Activated naive CD8-positive, alpha-beta T cell treated with anti-CD3 and anti-CD28 coated beads, Interleukin-2, amount 10 ng/mL, durations not matched to agents 7 days and 5 days (primary cell): ENCODE measurements at regions of chr16 and their contacts with region 1.

Region 1: DNA sequence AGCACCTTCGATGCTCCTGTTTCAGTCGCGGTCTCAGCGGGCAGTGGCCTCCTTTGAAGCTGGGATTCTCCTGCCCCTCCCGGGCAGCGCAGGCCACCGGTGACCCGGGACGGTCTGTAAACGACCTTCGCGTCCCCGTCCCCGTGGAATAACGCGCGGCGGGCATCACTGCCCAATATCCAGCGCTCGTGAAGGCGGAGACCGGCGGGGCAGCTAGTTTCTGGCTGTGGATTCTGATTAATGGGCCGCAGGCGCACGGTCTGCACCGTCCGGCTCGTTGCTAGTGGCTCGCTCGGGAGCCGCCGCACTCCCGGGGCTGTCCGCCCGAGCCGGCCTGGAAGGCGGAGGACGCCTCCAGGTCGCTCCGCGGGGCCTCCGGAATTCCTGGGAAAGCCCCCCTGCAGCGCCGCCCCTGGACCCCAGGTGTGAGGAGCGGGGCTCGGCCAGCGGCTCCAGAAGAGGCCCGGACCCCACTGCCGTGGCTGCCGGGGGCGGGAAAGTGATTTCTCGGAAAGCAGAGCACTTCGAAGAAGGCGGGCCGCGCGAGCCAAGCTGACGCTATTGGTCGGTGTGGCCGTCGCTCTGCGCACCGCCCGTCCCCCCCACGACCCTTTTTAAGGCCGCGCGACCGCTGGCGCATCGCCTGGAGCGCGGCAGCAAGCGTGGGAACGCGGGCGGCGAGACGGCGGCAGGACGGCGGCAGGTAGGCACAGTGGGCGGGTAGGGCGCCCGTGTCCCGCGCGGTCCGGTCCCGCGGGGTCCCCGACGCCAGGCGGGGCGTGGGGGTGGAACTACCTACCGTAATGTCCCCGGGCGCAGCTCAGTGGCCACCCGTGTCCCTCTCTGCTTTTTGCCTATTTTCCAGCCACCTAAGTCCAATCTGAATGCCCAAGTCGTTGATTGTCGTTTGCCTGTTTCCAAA is at the start of gene IRF8:
- DNase-seq: peak; percentile 87
- ATAC-seq: peak; percentile 79
- H3K4me3 Mint-ChIP-seq: peak within 1 kb of the TSS; percentile 86
- H3K27ac Mint-ChIP-seq: peak within 1 kb of the TSS; percentile 75
- H3K4me1 Mint-ChIP-seq: peaks cover 53% of the 10 kb centered on the region
- H3K27me3 Mint-ChIP-seq: peaks cover 6% of the 10 kb centered on the region
- total RNA-seq, gene IRF8: 27.8 to 30.8 TPM

Region 2: DNA sequence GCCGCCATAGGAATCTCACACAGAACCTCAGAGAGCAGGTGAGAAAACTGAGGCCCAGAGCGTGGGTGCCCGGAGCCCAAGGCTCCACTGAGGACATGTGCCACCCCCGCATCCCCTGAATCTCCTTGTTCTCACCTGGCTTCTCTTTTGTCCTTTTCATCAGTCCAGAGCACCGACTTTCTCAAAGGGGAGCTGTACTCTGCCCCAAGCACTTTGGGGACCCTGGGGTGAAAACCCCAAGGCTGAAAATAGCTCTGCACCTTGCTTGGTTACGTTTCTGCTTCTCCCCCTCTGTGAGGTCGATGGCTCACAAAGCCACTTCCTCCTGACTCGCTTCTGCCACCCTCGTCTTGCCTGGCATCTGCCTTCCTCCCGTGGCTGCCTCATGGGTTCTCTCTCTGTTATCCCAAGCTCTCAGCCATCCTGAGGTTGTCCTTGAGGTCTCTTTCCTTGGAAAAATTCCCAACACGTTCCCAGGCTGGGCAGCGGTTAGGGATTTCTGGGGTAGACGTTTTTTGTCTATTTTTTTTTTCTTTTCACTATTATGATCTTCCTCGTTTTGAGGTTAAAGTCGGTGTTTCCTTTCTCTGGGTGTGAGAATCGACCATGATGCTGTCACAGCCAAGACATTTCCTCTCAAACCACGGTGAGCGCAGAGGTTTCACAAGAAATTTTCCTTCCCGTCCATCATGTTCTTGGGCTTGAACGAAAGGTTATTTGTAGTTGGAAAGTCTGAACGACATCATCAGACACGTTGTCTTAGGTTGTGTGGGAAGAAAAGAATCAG is 37.4 kb after region 1 on chr16:
- POLR2A ChIA-PET with region 1: interaction called, 18 read pairs
- DNase-seq: peak; percentile 75
- ATAC-seq: peak; percentile 88
- H3K4me3 Mint-ChIP-seq: peak overlapping the region; percentile 78
- H3K27ac Mint-ChIP-seq: peak overlapping the region; percentile 95
- H3K4me1 Mint-ChIP-seq: peaks cover 40% of the 10 kb centered on the region
- H3K27me3 Mint-ChIP-seq: no peaks in the 10 kb centered on the region

Region 3: DNA sequence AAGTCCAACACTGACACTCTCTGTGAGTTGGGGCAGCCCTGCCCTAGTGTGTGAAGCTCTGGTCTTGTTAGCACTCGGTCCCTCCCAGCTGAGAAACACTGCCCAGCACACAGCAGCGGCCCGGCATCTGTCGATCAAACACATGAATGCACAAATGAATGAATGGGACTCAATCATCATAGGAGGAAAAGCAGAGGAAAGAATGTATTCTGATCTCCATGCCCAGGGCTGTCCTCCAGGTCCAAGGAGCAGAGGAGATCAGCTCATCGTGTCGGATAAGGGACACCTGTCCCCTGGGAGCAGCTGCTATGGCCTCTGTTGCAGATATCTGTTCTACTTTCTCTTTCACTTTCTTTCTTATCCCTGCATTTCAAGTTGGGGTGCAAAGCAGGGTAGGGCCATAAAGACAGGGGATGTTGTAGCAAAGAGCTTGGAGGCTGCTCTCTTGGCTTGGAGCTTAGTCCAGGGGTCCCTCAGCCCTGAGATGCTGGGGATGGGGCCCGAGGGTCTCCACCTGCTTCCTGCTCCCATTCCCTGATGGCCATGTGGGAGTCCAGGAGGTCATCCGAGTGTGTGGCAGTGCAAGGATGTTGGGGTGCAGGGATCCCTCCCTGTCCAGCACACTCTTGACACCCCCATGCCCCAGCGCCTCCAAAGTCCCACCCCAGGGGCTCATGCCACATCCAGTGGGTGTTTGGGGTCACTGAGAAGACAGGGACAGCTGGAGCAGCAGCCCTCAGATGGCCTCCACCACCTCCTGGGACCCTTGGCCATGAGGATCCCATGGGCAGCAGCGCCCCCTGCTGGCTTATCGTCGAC is 88.4 kb after region 1 on chr16:
- POLR2A ChIA-PET with region 1: interaction called, 12 read pairs
- DNase-seq: peak; percentile 69
- ATAC-seq: peak; percentile 65
- H3K4me3 Mint-ChIP-seq: peak overlapping the region; percentile 41
- H3K27ac Mint-ChIP-seq: peak overlapping the region; percentile 68
- H3K4me1 Mint-ChIP-seq: peaks cover 37% of the 10 kb centered on the region
- H3K27me3 Mint-ChIP-seq: no peaks in the 10 kb centered on the region